ENCODE measurements at regions of chr4 and their contacts with region 1.

Region 1: DNA sequence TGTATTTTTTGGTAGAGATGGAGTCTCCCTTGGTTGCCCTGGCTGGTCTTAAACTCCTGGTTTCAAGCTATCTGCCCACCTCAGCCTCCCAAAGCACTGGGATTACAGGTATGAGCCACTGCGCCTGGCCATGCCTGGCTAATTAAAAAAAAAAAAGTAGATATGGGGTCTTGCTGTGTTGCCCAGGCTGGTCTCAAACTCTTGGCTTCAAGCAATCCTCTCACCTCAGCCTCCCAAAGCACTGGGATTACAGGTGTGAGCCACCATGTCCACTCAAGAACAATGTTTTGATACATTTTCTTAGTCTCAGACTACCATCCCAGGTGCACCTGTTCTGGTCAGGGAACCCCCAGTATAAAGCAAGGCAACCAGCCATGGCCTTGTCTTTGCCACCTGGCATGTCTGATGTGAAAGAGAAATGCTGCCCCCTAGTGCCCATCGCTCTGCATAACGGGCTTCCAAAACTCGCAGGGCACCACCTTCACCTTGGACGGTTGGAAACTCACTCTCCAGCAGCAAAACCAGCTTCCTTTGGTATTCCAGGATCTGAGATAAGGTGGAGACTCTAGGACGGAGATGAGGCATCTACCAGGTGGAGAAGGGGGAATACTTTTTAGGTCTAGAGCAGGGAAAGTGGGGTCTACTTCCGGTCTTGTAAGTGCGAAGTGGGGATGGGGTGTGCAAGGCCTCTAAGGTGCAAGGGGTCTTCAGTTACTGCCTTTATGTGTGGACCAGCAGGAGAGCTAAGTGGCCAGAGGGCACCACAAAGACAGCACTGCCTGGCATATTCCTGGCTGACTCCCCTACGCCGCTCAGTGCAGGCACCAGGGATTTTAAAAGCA is 47.7 kb upstream of the AFAP1 start:
- DNase-seq: peak; percentile 88
- ATAC-seq: peak; percentile 92
- H3K4me3 Mint-ChIP-seq: no peak overlapping the region
- H3K27ac Mint-ChIP-seq: no peak overlapping the region
- H3K4me1 Mint-ChIP-seq: peaks cover 7% of the 10 kb centered on the region
- H3K27me3 Mint-ChIP-seq: peaks cover 5% of the 10 kb centered on the region
- CTCF ChIP-seq: peak; percentile 84

Region 2: DNA sequence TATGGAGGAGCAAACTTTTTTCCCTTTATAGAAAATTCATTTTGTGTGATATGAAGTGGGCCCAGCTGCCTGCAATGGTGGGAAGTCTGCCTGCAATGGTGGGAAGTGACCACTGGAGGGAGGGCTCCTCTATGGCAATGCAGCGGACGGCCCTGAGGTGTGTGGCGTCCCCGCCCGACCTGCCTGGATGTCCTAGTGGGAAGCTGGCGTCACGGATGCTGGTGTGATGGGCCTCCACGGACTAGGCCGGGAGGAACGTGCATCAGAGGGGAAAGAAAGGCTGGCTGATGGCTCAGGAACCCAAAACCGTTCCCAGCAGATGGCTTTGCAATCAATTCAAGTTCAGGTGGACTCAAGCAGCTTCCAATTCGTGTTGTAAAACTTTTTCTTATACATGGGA is 225.6 kb before region 1 on chr4:
- CTCF ChIA-PET with region 1: interaction called, 10 read pairs
- POLR2A ChIA-PET with region 1: no interaction called
- intact Hi-C with region 1: no loop called
- DNase-seq: peak; percentile 71
- ATAC-seq: peak; percentile 63
- H3K4me3 Mint-ChIP-seq: no peak overlapping the region
- H3K27ac Mint-ChIP-seq: peak overlapping the region; percentile 71
- H3K4me1 Mint-ChIP-seq: peaks cover 39% of the 10 kb centered on the region
- H3K27me3 Mint-ChIP-seq: no peaks in the 10 kb centered on the region
- CTCF ChIP-seq: peak; percentile 75

Region 3: DNA sequence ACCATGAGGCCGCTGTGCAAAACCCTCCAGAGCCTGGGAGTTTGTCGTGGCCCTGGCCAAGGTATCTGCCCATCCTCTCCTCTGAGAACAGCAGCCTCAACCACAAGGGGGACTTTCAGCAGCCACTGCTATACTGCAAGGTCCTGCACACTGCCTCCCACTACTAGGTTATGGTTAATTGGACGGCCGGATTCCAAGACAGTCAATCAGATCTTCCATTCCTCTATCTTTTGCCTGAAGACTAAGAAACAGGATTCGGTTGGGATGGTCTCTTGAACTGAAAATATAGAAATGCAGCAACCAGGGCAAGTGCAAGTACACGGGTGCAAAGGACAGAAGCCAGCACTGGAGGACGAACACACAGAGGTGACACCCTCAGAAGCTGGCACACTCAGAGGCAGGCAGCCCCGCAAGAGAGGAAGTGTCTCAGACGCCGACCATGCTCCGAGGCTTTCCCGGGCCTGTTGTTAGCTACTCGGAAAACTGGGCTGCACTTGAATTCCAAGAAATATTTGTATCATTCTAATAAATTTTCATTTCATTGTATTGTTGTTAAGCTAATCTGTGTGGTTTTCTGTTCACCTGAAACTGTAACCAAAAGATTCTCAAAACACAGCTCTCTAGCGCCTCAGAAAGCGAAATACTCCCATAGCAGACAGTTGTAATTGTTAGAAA is 111.0 kb before region 1 on chr4:
- CTCF ChIA-PET with region 1: interaction called, 11 read pairs
- POLR2A ChIA-PET with region 1: no interaction called
- intact Hi-C with region 1: no loop called
- DNase-seq: peak; percentile 64
- ATAC-seq: peak; percentile 87
- H3K4me3 Mint-ChIP-seq: peak overlapping the region; percentile 40
- H3K27ac Mint-ChIP-seq: peak overlapping the region; percentile 78
- H3K4me1 Mint-ChIP-seq: peaks cover 36% of the 10 kb centered on the region
- H3K27me3 Mint-ChIP-seq: no peaks in the 10 kb centered on the region
- CTCF ChIP-seq: peak; percentile 27

Region 4: DNA sequence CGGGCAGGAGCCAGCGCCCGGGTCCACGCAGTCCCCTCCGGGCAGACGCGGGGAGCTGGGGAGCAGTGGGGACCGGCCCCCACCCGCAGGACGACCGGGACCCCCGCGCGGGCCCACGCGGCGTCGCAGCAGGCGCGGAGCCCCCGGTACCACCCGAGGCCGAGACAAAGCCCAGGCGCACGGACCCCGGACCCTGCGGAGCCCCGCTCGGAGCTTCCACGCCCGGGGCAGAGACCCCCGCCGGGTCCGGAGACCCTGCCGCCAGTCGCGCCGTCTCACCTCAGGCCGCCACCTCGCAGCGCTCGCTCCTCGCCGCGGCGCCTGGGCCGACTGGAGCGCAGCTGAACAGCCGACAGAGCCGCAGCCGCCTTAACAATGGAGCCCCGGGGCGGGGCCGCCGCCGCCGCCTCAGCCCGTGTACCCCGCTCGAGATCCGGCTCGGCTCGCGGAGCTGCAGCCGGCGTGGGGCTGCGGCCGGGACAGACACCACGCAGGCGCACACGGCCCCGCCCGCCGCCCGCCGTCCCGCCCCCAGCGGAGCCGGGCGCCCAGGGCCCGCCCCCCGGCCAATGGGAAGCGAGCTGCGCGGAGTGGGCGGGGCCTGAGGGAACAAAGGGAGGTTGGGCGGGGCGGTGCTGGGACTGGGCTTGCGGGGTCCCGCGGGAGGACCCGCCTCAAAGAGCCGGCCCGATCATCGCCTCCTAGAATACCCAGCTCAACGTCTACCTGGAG is 47.8 kb before region 1 on chr4 and contains the start of gene AFAP1:
- CTCF ChIA-PET with region 1: interaction called, 22 read pairs
- POLR2A ChIA-PET with region 1: no interaction called
- intact Hi-C with region 1: no loop called
- DNase-seq: peak; percentile 88
- ATAC-seq: peak; percentile 98
- H3K4me3 Mint-ChIP-seq: peak within 1 kb of the TSS; percentile 81
- H3K27ac Mint-ChIP-seq: no peak within 1 kb of the TSS
- H3K4me1 Mint-ChIP-seq: peaks cover 33% of the 10 kb centered on the region
- H3K27me3 Mint-ChIP-seq: peaks cover 8% of the 10 kb centered on the region
- CTCF ChIP-seq: no peak
- total RNA-seq, gene AFAP1: 25.5 to 26.5 TPM